ENCODE measurements at regions of chr7 and their contacts with region 1.

Region 1: DNA sequence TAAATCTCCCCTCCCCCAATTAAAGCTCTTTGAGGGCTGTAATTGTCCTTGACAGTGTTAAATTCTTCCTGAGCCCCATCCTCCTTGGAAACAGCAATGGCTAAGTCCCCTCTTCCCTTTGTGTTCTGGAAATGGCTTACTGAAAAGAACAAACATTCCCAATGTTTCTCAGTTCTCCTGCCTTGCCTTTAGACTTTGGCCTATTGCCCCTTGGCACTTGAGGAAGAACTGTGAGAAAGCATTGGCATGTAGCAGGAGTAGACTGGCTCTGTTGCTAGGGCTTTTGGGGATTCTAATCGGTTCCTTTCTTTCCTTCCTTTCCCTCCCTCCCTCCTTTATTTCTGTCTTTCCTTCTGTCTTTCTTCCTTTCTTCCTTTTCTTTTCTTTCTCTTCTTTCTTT is 463.3 kb upstream of the PODXL start:
- DNase-seq: no peak
- H3K4me3 ChIP-seq: no peak overlapping the region
- H3K27ac ChIP-seq: no peak overlapping the region
- H3K4me1 ChIP-seq: no peaks in the 10 kb centered on the region
- H3K27me3 ChIP-seq: no peaks in the 10 kb centered on the region
- CTCF ChIP-seq: no peak

Region 2: DNA sequence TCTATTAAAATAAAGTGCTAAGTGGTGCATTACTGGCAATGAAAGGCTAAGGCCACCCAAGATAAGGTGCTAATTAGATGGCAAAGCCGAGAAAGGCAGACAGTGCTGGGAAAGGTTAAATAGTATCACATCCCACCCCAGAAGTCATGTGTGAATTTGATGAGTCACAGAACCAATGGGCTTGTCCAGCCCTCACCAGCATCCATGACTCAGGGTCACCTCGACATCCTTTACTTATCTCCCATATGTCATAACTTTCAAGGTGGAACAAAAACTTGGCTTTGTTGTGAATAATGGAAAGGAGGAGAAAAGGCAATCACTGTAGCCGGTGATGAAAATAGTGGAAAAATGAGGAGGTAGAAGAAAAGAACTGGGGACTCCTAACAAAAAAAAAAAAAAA is 97.5 kb after region 1 on chr7:
- CTCF ChIA-PET with region 1: no interaction called
- POLR2A ChIA-PET with region 1: no interaction called
- intact Hi-C with region 1: no loop called
- DNase-seq: peak; percentile 68 to 84
- H3K4me3 ChIP-seq: no peak overlapping the region
- H3K27ac ChIP-seq: peak overlapping the region; percentile 89
- H3K4me1 ChIP-seq: peaks cover 52% of the 10 kb centered on the region
- H3K27me3 ChIP-seq: no peaks in the 10 kb centered on the region
- CTCF ChIP-seq: no peak

Region 3: GRCh38 chr7:133737526-133737925 is 1717.8 kb after region 1 on chr7:
- CTCF ChIA-PET with region 1: no interaction called
- POLR2A ChIA-PET with region 1: interaction called, 14 read pairs
- intact Hi-C with region 1: no loop called
- DNase-seq: peak in 1 of 2 experiments; percentile 49
- H3K4me3 ChIP-seq: no peak overlapping the region
- H3K27ac ChIP-seq: no peak overlapping the region
- H3K4me1 ChIP-seq: peaks cover 23% of the 10 kb centered on the region
- H3K27me3 ChIP-seq: no peaks in the 10 kb centered on the region
- CTCF ChIP-seq: no peak